CD4-positive, alpha-beta T cell (primary cell): ENCODE measurements at regions of chr13 and their contacts with region 1.

Region 1: GRCh38 chr13:98576963-98577822 is at the start of gene STK24:
- DNase-seq: peak in 11 of 14 experiments; percentile 15 to 86 (median 65)
- ATAC-seq: peak; percentile 39
- H3K4me3 ChIP-seq: peak within 1 kb of the TSS; percentile 83
- H3K4me3 Mint-ChIP-seq: peak within 1 kb of the TSS; percentile 97
- H3K27ac ChIP-seq: peak within 1 kb of the TSS; percentile 82 to 84
- H3K27ac Mint-ChIP-seq: peak within 1 kb of the TSS; percentile 93
- H3K4me1 ChIP-seq: peaks cover 25% of the 10 kb centered on the region
- H3K4me1 Mint-ChIP-seq: peaks cover 49% of the 10 kb centered on the region
- H3K27me3 ChIP-seq: no peaks in the 10 kb centered on the region
- H3K27me3 Mint-ChIP-seq: no peaks in the 10 kb centered on the region
- CTCF ChIP-seq: no peak
- total RNA-seq, gene STK24: 82.3 to 85.2 TPM

Region 2: DNA sequence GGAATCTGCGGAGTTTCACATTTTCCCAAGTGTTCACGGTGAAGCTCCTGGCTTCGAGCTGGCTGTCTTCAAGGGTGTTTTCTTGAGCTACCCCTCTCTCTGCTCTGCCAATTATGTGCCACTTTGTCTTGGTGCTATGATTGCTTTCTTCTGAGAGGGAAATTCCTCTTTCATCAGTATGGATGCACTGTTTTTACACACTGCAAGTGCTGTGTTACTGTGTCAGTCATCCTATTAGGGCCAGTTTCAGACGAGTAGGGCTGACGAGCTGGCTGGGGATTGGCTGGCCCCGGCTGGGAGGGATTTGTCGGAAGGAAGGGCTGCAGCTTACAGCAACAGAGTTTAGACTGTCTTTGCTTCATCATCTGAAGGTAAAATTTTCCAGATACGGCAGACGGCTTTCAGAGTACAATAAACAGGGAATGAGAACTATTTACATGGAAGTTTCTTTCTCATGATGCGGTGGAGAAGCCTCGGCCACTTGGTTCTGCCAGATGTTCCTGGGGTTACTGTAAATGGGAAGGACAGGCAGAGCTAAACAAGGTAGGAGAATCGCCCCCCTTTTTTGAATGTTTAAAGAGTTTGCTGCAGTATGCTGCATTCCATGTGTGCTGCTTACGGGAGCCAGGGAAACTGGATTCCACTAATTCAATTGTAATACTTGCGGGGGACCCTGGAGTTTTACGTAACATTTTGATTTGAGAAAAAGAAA is 1355.0 kb before region 1 on chr13 and contains the start of gene MBNL2:
- CTCF ChIA-PET with region 1: no interaction called
- POLR2A ChIA-PET with region 1: no interaction called
- intact Hi-C with region 1: loop called in 1 of 2 experiments (anchors 10 kb)
- DNase-seq: peak; percentile 73 to 94 (median 80)
- ATAC-seq: peak; percentile 95
- H3K4me3 ChIP-seq: peak within 1 kb of the TSS; percentile 58
- H3K4me3 Mint-ChIP-seq: peak within 1 kb of the TSS; percentile 91
- H3K27ac ChIP-seq: peak within 1 kb of the TSS; percentile 77 to 81
- H3K27ac Mint-ChIP-seq: peak within 1 kb of the TSS; percentile 89
- H3K4me1 ChIP-seq: peaks cover 32% of the 10 kb centered on the region
- H3K4me1 Mint-ChIP-seq: peaks cover 40% of the 10 kb centered on the region
- H3K27me3 ChIP-seq: no peaks in the 10 kb centered on the region
- H3K27me3 Mint-ChIP-seq: no peaks in the 10 kb centered on the region
- CTCF ChIP-seq: no peak
- total RNA-seq, gene MBNL2: 35.9 to 36.0 TPM

Region 3: GRCh38 chr13:97648171-97648880 is 928.9 kb before region 1 on chr13:
- CTCF ChIA-PET with region 1: no interaction called
- POLR2A ChIA-PET with region 1: no interaction called
- intact Hi-C with region 1: no loop called
- DNase-seq: no peak
- ATAC-seq: no peak
- H3K4me3 ChIP-seq: no peak overlapping the region
- H3K4me3 Mint-ChIP-seq: no peak overlapping the region
- H3K27ac ChIP-seq: no peak overlapping the region
- H3K27ac Mint-ChIP-seq: no peak overlapping the region
- H3K4me1 ChIP-seq: no peaks in the 10 kb centered on the region
- H3K4me1 Mint-ChIP-seq: no peaks in the 10 kb centered on the region
- H3K27me3 ChIP-seq: peaks cover 0 to 2% of the 10 kb centered on the region in 2 experiments
- H3K27me3 Mint-ChIP-seq: peaks cover 14% of the 10 kb centered on the region
- CTCF ChIP-seq: no peak

Region 4: GRCh38 chr13:97975848-97976609 is 601.2 kb before region 1 on chr13:
- CTCF ChIA-PET with region 1: no interaction called
- POLR2A ChIA-PET with region 1: no interaction called
- intact Hi-C with region 1: loop called in 1 of 2 experiments (anchors 5 kb)
- DNase-seq: peak; percentile 16 to 97 (median 88)
- ATAC-seq: peak; percentile 89
- H3K4me3 ChIP-seq: peak overlapping the region; percentile 91
- H3K4me3 Mint-ChIP-seq: peak overlapping the region; percentile 96
- H3K27ac ChIP-seq: peak overlapping the region; percentile 75 to 82
- H3K27ac Mint-ChIP-seq: peak overlapping the region; percentile 92
- H3K4me1 ChIP-seq: peaks cover 15% of the 10 kb centered on the region
- H3K4me1 Mint-ChIP-seq: peaks cover 48% of the 10 kb centered on the region
- H3K27me3 ChIP-seq: no peaks in the 10 kb centered on the region
- H3K27me3 Mint-ChIP-seq: no peaks in the 10 kb centered on the region
- CTCF ChIP-seq: no peak

Region 5: GRCh38 chr13:98476538-98476966 is 100.6 kb before region 1 on chr13:
- CTCF ChIA-PET with region 1: no interaction called
- POLR2A ChIA-PET with region 1: interaction called, 13 read pairs
- intact Hi-C with region 1: loop called (anchors 2 to 5 kb)
- DNase-seq: peak; percentile 59 to 97 (median 82)
- ATAC-seq: peak; percentile 92
- H3K4me3 ChIP-seq: peak overlapping the region; percentile 30
- H3K4me3 Mint-ChIP-seq: peak overlapping the region; percentile 77
- H3K27ac ChIP-seq: peak overlapping the region; percentile 66 to 78
- H3K27ac Mint-ChIP-seq: peak overlapping the region; percentile 92
- H3K4me1 ChIP-seq: peaks cover 72% of the 10 kb centered on the region
- H3K4me1 Mint-ChIP-seq: peaks cover 67% of the 10 kb centered on the region
- H3K27me3 ChIP-seq: no peaks in the 10 kb centered on the region
- H3K27me3 Mint-ChIP-seq: no peaks in the 10 kb centered on the region
- CTCF ChIP-seq: no peak

Region 6: GRCh38 chr13:98484289-98485219 is 92.6 kb before region 1 on chr13:
- CTCF ChIA-PET with region 1: interaction called, 4 read pairs
- POLR2A ChIA-PET with region 1: interaction called, 4 read pairs
- intact Hi-C with region 1: loop called (anchors 2 to 5 kb)
- DNase-seq: peak; percentile 33 to 93 (median 61)
- ATAC-seq: peak; percentile 80
- H3K4me3 ChIP-seq: no peak overlapping the region
- H3K4me3 Mint-ChIP-seq: peak overlapping the region; percentile 69
- H3K27ac ChIP-seq: peak overlapping the region; percentile 29 to 50
- H3K27ac Mint-ChIP-seq: peak overlapping the region; percentile 89
- H3K4me1 ChIP-seq: peaks cover 88% of the 10 kb centered on the region
- H3K4me1 Mint-ChIP-seq: peaks cover 81% of the 10 kb centered on the region
- H3K27me3 ChIP-seq: no peaks in the 10 kb centered on the region
- H3K27me3 Mint-ChIP-seq: no peaks in the 10 kb centered on the region
- CTCF ChIP-seq: no peak

Region 7: DNA sequence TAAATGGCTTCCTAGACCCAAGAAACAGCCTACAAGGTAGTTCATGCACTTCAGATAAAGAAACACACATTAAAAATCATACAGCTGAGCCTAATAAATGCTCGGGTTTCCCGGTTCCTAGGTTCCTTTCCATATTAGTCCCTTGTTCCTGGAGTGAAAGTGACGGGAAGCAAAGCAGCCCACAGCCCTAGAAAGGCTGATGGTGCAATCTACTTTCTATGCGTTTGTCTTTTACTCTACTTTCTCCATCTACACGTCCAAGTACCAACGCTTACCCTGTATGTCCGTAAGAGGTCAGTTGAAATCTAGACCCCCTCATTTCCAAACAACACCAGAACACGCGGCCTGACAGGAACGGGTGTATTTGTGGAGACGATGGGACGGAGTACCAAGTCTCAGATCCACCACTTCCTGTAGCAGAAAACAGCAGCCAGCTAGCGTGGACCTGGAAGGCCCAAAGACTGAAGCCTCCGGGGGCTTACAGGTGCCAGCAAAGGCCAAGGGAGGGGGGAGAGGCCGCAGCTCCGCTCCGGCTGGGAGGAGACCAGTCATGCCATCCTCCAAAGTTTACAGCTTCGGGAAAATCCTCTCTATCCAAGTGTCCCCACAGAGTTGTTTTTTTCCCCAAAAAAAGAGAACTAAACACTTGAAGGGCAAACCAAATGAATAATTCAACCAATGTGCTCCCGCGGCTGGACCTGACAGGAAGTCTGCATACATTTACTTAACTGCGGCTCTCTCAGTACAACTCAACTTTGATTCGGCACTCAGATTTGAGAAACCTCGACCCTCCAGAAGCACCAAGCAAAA is 34.4 kb before region 1 on chr13:
- CTCF ChIA-PET with region 1: no interaction called
- POLR2A ChIA-PET with region 1: no interaction called
- intact Hi-C with region 1: loop called in 1 of 2 experiments (anchors 5 kb)
- DNase-seq: peak in 3 of 14 experiments; percentile 47 to 58 (median 49)
- ATAC-seq: peak; percentile 61
- H3K4me3 ChIP-seq: peak overlapping the region; percentile 37
- H3K4me3 Mint-ChIP-seq: peak overlapping the region; percentile 65
- H3K27ac ChIP-seq: peak overlapping the region in 1 of 2 donors; percentile 28
- H3K27ac Mint-ChIP-seq: peak overlapping the region; percentile 63
- H3K4me1 ChIP-seq: peaks cover 77% of the 10 kb centered on the region
- H3K4me1 Mint-ChIP-seq: peaks cover 94% of the 10 kb centered on the region
- H3K27me3 ChIP-seq: no peaks in the 10 kb centered on the region
- H3K27me3 Mint-ChIP-seq: no peaks in the 10 kb centered on the region
- CTCF ChIP-seq: no peak

Region 8: GRCh38 chr13:98565726-98566565 is 11.2 kb before region 1 on chr13:
- CTCF ChIA-PET with region 1: interaction called, 3 read pairs
- POLR2A ChIA-PET with region 1: interaction called, 42 read pairs
- intact Hi-C with region 1: no loop called
- DNase-seq: peak in 3 of 14 experiments; percentile 18 to 40 (median 34)
- ATAC-seq: no peak
- H3K4me3 ChIP-seq: peak overlapping the region; percentile 8
- H3K4me3 Mint-ChIP-seq: peak overlapping the region; percentile 80
- H3K27ac ChIP-seq: peak overlapping the region; percentile 58 to 71
- H3K27ac Mint-ChIP-seq: peak overlapping the region; percentile 93
- H3K4me1 ChIP-seq: peaks cover 89% of the 10 kb centered on the region
- H3K4me1 Mint-ChIP-seq: peaks cover 96% of the 10 kb centered on the region
- H3K27me3 ChIP-seq: no peaks in the 10 kb centered on the region
- H3K27me3 Mint-ChIP-seq: no peaks in the 10 kb centered on the region
- CTCF ChIP-seq: no peak